Posterior vena cava (tissue), 2 donors: ENCODE measurements at regions of chr18 and their contacts with region 1.

Region 1: GRCh38 chr18:9506046-9506792 is 30.9 kb downstream of the RALBP1 start:
- DNase-seq: no peak

Region 2: DNA sequence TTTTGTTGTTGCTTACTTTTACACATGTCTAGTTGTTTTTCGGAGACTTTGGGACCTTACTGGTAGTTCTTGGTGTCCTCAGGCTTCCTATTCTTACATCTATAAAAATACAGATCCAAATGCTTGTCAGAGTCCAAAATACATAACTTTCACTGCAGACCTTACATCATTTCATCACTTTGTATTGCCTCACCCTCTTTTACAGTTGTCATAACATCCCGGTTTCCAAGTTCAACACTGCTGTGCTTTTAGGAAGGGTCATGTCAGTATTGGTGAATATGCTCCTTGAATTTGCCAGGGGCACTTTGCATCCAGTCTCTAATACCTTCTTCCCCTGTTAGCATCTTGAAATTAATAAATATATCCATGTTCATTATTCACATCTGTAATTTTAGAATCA is 1415.2 kb before region 1 on chr18:
- intact Hi-C with region 1: loop called in 1 of 2 experiments (anchors 10 kb)
- DNase-seq: no peak

Region 3: DNA sequence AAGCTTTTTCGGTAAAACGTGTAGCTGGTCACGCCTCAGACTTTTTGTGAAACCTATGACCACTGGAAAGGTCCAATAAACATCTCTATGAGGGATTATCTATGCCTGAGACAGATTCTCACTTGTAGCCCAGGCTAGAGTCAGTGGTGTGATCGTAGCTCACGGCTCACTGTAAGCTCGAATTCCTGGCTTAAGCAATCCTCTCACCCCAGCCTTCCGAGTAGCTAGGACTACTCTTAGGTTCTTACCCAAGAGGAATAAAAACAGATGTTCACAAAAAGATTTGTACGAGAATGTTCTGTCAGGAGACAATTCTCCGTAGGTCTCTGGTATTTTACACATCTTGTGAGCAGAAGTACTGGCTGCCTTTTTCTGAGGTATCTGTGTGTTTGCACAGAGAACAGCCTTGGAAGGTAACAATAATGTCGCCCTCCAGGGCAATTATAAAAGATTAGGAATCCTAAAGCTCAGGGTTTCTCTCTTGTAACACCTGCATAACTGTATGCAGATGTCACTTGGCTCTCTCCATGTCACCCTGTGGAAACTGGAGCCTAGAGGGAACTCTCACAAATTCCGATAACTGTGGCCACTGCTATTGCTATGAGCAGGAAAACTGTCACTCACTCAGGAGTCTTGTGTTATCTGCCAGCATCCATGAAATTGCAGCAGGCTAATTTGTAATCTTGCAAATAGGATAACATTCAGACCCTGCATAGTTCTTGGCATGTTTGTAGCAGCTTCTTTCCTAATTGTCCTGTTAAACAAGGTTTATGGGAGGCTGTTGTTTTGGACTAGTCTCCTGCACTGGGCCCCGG is 56.4 kb before region 1 on chr18:
- intact Hi-C with region 1: loop called in 1 of 2 experiments (anchors 2 kb)
- DNase-seq: no peak

Region 4: DNA sequence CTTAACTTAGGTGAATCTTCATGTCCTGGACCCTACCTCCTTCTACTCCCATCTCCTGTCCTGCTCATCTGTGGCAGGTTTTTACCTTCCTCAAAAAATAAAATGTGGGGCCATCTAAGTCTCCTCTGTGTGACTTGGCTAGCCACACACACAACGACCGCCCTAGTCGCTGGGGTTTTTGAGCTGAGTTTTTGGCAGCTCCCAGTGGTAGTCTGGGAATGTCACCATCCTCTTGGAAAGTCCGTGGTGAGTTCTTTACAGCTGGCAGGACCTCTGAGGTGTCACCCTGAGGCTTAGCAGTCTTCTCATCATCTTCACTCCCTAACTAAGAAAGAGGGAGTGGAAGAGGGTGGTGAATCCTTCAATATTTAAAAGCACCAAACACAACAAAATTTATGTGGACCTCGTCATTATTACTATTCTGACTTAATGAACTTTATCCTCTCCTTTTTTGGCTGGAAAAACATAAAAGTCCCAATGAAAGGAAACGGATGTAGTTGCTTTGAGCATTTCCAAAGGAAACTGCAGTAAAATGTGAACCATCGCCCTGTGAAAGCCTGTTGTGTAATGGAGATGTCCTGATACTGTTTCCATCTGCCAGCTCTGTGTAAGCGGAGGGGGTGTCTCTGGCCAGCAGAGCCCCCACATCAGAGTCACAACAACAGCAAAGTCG is 486.2 kb after region 1 on chr18:
- intact Hi-C with region 1: no loop called
- DNase-seq: no peak